Right ventricle myocardium inferior (tissue), 1 donor: ENCODE measurements at regions of chr7 and their contacts with region 1.

Region 1: DNA sequence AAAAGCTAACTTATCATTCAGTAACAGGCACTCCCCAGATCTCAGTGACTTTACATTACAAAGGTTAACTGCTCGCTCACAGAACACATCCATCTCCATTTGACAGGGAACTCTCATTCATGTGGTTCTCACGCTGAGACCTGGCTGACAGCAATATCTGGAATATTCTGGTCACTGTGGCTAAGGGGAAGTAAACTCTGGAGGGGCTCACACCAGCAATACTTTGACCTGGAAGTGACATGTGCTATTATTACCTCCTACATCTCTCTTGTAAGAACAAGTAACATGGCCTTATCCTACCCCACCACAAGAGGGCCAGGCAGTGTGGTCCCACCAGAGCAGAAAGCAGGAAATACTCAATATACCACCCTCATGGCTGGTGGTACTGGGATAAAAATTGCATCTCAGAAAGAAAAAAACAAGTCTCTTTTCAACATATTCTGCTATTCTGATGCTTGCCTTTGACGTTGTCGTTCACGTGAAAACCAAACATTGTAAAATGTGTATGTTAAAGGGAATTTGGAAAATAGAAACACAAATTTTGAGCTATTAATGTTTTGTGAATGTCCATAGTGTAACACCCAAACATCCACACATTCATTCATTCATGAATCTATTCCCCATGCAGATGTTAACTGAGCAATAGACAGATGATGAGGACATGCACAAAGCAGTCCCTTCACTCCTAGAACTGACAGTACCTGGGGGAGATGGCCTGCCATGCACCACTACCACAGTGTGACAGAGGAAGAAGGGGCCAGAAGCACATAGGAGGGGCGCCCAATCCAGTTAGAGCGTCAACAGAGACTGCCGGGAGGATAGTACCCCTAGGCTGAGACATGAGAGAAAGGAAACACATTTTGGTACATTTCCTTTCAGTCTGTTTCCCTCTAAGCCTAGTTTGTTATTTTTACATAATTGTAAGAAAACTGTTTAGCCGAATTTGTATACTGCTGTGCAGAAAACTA is 166.0 kb upstream of the SP4 start:
- DNase-seq: no peak
- ATAC-seq: no peak

Region 2: GRCh38 chr7:21146642-21147433 is 115.1 kb before region 1 on chr7:
- intact Hi-C with region 1: no loop called
- DNase-seq: no peak
- ATAC-seq: no peak

Region 3: GRCh38 chr7:21281183-21281582 is 19.3 kb after region 1 on chr7:
- intact Hi-C with region 1: no loop called
- DNase-seq: no peak
- ATAC-seq: no peak

Region 4: GRCh38 chr7:21767300-21767900 is 505.5 kb after region 1 on chr7:
- intact Hi-C with region 1: loop called (anchors 5 kb)
- DNase-seq: no peak
- ATAC-seq: peak; percentile 84